Activated naive CD4-positive, alpha-beta T cell treated with anti-CD3 and anti-CD28 coated beads for 36 hours (primary cell): ENCODE measurements at regions of chr2 and their contacts with region 1.

Region 1: DNA sequence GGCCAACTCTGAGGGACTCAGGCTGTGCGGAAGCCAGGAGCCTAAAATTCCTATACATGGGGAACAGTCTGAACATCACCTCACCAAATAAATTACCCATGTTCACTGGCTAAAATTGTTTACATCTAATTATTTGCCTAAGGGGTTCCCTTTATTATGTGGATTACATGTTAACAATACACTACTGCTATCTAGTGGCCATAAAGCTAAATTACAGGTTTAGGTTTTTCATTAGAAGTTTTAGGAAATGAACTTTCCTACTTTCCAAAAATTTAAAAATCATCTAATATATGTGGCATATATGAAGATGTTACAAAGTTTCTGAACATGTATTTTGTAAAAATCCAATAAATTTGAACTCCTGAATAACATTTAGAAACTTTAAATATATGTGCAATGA is 40.3 kb downstream of the PLA2R1 start:
- DNase-seq: no peak
- H3K4me3 Mint-ChIP-seq: no peak overlapping the region
- H3K27ac Mint-ChIP-seq: no peak overlapping the region
- H3K4me1 Mint-ChIP-seq: no peaks in the 10 kb centered on the region
- H3K27me3 Mint-ChIP-seq: peaks cover 7% of the 10 kb centered on the region

Region 2: GRCh38 chr2:159788253-159788652 is 233.9 kb before region 1 on chr2:
- CTCF ChIA-PET with region 1: no interaction called
- intact Hi-C with region 1: loop called (anchors 5 kb)
- DNase-seq: no peak
- H3K4me3 Mint-ChIP-seq: no peak overlapping the region
- H3K27ac Mint-ChIP-seq: no peak overlapping the region
- H3K4me1 Mint-ChIP-seq: peaks cover 6% of the 10 kb centered on the region
- H3K27me3 Mint-ChIP-seq: no peaks in the 10 kb centered on the region

Region 3: GRCh38 chr2:160006475-160006874 is 15.7 kb before region 1 on chr2:
- CTCF ChIA-PET with region 1: no interaction called
- intact Hi-C with region 1: no loop called
- DNase-seq: no peak
- H3K4me3 Mint-ChIP-seq: no peak overlapping the region
- H3K27ac Mint-ChIP-seq: no peak overlapping the region
- H3K4me1 Mint-ChIP-seq: no peaks in the 10 kb centered on the region
- H3K27me3 Mint-ChIP-seq: peaks cover 3% of the 10 kb centered on the region